Activated B cell treated with CpG ODN at 0.5 μM for 24 hours (primary cell): ENCODE measurements at regions of chr2 and their contacts with region 1.

Region 1: DNA sequence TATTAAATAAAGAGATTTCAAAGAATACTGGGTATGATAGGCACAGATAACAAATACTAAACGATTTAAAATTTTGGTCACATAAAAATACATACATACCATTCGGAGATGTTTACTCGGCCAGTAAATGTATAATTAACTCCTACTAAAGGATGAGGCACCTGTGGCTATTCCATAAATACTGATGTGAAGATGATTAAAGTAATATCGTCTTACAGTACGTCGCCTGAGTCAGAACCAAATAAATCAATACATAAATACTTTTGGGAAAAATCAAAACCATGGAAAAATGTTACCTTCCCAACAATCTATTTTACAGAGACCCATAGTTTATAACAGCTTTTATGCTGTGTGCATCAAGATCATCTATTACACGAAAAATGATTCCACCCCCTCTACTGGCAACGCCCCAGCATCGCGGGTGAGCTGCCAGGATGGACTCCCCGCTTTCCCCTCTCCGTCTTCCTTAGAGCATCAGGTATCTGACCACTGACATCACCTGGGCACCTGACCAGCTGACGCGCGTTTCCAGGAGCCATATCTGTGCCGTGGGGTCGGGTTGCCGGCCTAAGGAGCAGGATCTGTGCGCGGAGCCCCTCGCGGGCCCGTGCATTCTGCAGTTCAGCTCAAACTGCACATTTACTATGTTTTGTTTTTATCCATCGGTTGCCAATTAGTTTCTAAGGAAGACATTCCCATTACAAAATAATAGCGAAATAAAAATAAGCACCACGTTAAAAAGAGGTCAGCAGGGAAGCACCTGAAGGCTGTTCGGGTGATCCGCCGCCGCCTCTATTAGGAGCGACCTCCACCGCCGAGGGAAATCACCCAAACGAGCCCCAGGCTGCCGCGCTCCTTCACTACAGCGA is 901 bp downstream of the ICA1L start:
- DNase-seq: peak; percentile 53
- ATAC-seq: peak; percentile 81
- H3K4me3 Mint-ChIP-seq: peak overlapping the region; percentile 92
- H3K27ac Mint-ChIP-seq: peak overlapping the region; percentile 81
- H3K4me1 Mint-ChIP-seq: peaks cover 5% of the 10 kb centered on the region
- H3K27me3 Mint-ChIP-seq: no peaks in the 10 kb centered on the region
- CTCF ChIP-seq: peak; percentile 12

Region 2: DNA sequence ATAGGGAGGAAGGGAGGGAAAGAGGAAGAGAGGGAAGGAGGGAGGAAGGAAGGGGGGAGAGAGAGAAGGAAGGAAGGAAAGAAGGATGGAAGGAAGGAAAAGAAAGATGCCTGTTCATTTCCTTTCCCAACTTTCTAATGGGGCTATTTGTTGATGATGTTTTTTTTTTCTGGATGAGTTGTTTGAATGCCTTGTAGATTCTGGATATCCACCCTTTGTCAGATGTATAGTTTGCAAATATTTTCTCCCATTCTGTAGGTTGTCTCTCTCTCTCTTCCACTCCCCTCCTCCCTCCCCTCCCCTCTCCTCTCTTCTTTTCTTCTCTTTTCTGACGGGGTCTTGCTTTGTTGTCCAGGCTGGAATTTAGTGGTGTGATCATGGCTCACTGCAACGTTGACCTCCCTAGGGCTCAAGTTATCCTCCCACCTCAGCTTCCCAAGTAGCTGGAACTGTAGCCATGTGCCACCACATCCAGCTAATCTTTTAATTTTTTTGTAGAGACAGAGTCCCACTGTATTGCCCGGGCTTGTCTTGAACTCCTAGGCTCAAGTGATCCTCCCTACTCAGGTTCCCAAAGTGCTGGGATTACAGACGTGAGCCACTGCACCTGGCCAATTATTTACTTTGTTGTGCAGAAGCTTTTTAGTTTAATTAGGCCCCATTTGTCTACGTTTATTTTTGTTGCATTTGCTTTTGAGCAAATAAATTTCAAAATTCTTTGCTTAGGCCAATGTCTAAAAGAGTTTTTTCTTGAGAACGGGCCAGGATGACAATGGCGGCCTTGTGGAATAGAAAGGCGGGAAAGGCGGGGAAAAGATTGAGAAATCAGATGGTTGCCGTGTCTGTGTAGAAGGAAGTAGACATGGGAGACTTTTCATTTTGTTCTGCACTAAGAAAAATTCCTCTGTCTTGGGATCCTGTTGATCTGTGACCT is 293.1 kb before region 1 on chr2:
- CTCF ChIA-PET with region 1: interaction called, 32 read pairs
- POLR2A ChIA-PET with region 1: no interaction called
- intact Hi-C with region 1: loop called (anchors 1 kb)
- DNase-seq: no peak
- ATAC-seq: no peak
- H3K4me3 Mint-ChIP-seq: no peak overlapping the region
- H3K27ac Mint-ChIP-seq: no peak overlapping the region
- H3K4me1 Mint-ChIP-seq: no peaks in the 10 kb centered on the region
- H3K27me3 Mint-ChIP-seq: no peaks in the 10 kb centered on the region
- CTCF ChIP-seq: no peak

Region 3: DNA sequence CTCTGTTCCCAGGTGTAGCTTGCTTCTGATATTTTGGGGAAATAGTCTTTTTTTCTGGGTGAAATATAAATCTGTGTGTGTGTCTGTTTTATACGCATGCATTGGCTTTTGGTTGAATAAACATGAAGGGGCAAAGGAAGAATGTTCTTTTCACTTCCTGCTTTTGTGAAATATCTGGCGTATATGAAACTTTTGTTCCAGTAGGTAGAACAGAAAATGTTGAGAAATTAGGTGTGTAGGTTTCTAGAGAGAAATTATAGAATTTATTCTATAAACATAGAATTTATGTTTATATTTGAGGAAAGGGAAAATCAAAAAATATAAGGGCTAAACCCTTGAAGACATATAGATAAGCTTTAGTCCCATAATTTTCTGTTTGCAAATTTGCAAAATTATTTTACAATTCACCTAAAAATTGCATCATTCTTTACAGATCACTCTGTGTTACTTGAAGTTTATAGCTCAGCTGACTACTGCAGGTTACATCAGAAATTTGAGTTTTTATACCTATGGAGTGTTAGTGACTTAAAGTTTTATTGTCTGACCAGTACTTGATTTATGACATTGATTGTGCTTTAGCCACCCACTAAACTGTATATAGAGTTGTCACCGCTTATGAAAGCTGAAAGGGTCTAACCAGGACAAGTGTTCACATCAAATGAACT is 119.8 kb before region 1 on chr2:
- CTCF ChIA-PET with region 1: no interaction called
- POLR2A ChIA-PET with region 1: interaction called, 5 read pairs
- intact Hi-C with region 1: loop called (anchors 2 kb)
- DNase-seq: no peak
- ATAC-seq: peak; percentile 85
- H3K4me3 Mint-ChIP-seq: peak overlapping the region; percentile 54
- H3K27ac Mint-ChIP-seq: peak overlapping the region; percentile 92
- H3K4me1 Mint-ChIP-seq: peaks cover 51% of the 10 kb centered on the region
- H3K27me3 Mint-ChIP-seq: no peaks in the 10 kb centered on the region
- CTCF ChIP-seq: no peak

Region 4: DNA sequence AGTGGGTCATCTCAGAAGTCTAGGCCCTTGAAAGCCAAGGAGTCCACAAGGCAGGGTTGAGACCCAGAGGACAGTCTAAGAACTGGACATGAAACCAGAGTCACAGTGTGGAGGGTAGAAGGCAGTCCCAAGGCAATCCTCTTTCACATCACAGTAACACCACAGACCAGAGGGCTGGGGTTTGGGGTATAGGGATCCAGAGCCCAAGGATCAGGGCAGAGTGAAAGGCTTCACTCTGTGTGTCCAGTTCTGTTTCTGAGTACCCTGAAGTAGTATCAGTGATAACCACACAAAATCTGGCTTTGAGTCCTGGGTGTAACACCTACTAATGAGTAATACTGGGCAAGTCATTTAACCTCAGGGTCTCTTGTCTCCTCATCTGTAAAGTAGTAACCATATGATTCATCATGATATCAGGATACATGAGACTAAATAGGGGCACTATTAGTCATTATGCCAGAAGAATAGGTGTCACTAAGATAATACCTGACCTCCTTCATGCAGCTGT is 90.1 kb before region 1 on chr2:
- CTCF ChIA-PET with region 1: no interaction called
- POLR2A ChIA-PET with region 1: no interaction called
- intact Hi-C with region 1: loop called (anchors 2 kb)
- DNase-seq: no peak
- ATAC-seq: peak; percentile 81
- H3K4me3 Mint-ChIP-seq: no peak overlapping the region
- H3K27ac Mint-ChIP-seq: peak overlapping the region; percentile 33
- H3K4me1 Mint-ChIP-seq: peaks cover 11% of the 10 kb centered on the region
- H3K27me3 Mint-ChIP-seq: no peaks in the 10 kb centered on the region
- CTCF ChIP-seq: no peak

Region 5: GRCh38 chr2:202831242-202832220 is 39.1 kb before region 1 on chr2:
- CTCF ChIA-PET with region 1: interaction called, 4 read pairs
- POLR2A ChIA-PET with region 1: no interaction called
- intact Hi-C with region 1: loop called (anchors 1 kb)
- DNase-seq: no peak
- ATAC-seq: peak; percentile 58
- H3K4me3 Mint-ChIP-seq: no peak overlapping the region
- H3K27ac Mint-ChIP-seq: no peak overlapping the region
- H3K4me1 Mint-ChIP-seq: peaks cover 9% of the 10 kb centered on the region
- H3K27me3 Mint-ChIP-seq: no peaks in the 10 kb centered on the region
- CTCF ChIP-seq: no peak

Region 6: GRCh38 chr2:202848813-202849212 is 21.9 kb before region 1 on chr2:
- CTCF ChIA-PET with region 1: no interaction called
- POLR2A ChIA-PET with region 1: interaction called, 4 read pairs
- intact Hi-C with region 1: loop called (anchors 1 kb)
- DNase-seq: no peak
- ATAC-seq: peak; percentile 61
- H3K4me3 Mint-ChIP-seq: peak overlapping the region; percentile 46
- H3K27ac Mint-ChIP-seq: peak overlapping the region; percentile 77
- H3K4me1 Mint-ChIP-seq: peaks cover 23% of the 10 kb centered on the region
- H3K27me3 Mint-ChIP-seq: no peaks in the 10 kb centered on the region
- CTCF ChIP-seq: no peak

Region 7: GRCh38 chr2:203149194-203149593 is 278.5 kb after region 1 on chr2:
- CTCF ChIA-PET with region 1: no interaction called
- POLR2A ChIA-PET with region 1: no interaction called
- intact Hi-C with region 1: no loop called
- DNase-seq: no peak
- ATAC-seq: no peak
- H3K4me3 Mint-ChIP-seq: no peak overlapping the region
- H3K27ac Mint-ChIP-seq: no peak overlapping the region
- H3K4me1 Mint-ChIP-seq: no peaks in the 10 kb centered on the region
- H3K27me3 Mint-ChIP-seq: no peaks in the 10 kb centered on the region
- CTCF ChIP-seq: no peak